AG04449 (cell line): ENCODE measurements at regions of chr17 and their contacts with region 1.

Region 1: DNA sequence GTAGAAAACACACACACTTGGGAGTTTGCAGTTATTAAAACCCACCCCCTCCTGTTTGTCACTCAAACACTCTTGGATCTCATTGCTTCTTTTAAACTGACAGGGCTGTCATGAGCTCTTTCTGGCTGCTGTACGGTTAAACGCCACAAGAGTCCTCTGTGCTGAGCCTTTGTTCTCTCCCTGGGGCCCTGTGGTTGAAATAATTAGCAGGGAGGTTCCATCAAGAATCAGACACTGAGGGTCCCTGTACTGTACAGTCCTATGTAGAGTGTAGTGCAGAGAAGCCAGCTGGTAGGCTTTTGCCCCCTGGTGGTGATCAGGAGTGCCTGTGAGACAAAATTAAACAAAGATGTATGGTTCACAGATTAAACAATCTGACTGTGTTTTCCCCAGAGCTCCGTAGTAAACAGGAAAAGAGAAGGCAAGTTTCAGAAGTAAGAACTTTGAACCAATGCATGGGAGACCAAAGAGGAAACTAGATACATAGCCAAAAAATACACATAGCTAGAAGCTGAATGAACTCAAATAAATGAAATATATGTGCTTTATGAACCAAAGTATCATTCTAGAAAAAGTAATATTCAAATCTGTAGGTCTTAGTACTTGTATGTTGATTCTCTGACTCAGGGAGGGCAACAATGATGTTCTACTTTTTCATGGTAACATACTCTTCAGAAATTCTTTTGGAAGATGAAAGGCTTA is 1.4 kb upstream of the SSH2 start:
- DNase-seq: no peak
- H3K4me3 ChIP-seq: peak overlapping the region; percentile 97
- CTCF ChIP-seq: peak; percentile 77

Region 2: DNA sequence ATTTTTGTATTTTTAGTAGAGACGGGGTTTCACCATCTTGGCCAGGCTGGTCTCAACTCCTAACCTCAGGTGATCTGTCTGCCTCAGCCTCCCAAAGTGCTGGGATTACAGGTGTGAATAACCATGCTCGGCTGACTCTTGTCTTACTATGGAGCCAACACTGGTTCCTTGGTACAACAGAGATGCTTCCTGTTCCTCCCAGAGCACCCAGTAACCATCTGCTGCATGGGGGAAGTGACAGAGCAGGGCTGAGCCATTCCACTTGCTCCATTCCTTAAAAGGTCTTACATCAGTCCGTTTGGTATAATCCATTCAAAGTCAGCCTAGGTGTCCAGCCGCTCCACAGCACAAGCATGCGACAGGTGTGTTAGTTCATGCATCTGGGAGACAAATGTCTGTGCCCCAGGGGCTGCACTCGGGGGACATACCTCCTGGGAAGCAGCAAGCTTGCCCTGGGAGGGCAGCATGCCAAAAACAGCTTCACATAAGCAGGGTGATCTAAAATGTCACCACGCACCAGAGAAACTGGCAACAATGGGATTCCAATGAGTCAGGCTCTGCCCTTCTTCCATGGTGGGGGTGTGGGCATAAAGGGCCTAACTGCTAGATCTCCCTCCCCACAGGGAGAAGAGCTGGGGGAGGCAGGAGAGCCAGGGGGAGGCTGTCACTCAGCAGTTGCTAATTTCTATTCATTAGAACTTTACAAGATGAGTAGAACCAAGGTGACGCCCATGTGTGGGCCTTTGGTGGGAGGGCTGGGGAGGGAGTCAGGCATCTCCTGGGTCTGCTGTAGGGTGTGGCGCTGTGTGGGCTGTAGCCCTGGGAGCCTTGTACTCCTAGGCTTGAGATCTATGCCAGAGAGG is 853.0 kb before region 1 on chr17:
- CTCF ChIA-PET with region 1: no interaction called
- POLR2A ChIA-PET with region 1: no interaction called
- DNase-seq: no peak
- H3K4me3 ChIP-seq: no peak overlapping the region
- CTCF ChIP-seq: no peak

Region 3: DNA sequence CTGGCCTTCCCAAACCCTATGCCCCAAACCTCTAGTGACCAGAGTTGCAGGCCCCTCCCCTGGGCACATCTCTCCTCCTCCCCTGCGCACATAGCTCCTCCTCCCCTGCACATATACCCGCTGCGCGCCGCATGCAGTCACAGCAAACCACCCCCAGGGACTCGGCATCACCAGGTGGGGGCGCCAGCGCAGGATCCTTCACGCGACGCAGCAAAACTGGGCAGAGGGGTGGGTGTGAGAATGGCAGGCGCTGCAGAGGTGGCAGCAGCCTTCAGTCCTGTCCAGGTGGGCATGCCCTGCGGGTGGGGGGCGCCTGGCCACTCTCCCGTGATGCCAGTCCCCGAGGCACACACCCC is 314.3 kb before region 1 on chr17:
- CTCF ChIA-PET with region 1: interaction called, 18 read pairs
- POLR2A ChIA-PET with region 1: no interaction called
- DNase-seq: no peak
- H3K4me3 ChIP-seq: peak overlapping the region; percentile 12; the same call in 1 of the 2 replicates
- CTCF ChIP-seq: peak; percentile 87

Region 4: DNA sequence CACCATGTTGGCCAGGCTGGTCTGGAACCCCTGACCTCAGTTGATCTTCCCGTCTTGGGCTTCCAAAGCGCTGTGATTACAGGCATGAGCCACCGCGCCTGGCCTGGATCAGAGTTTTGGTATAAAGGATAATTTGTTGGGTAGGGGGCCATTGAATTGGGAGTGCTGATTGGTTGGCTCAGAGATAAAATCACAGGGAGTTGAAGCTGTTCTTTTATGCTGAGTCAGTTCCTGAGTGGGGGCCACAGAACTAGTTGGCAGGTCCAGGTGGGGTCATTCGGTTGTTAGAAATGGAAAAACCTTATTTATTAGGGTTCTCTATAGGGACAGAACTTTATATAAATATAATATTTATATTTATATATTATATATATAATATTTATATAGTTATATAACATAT is 148.5 kb before region 1 on chr17:
- CTCF ChIA-PET with region 1: interaction called, 25 read pairs
- POLR2A ChIA-PET with region 1: no interaction called
- DNase-seq: no peak
- H3K4me3 ChIP-seq: no peak overlapping the region
- CTCF ChIP-seq: no peak

Region 5: DNA sequence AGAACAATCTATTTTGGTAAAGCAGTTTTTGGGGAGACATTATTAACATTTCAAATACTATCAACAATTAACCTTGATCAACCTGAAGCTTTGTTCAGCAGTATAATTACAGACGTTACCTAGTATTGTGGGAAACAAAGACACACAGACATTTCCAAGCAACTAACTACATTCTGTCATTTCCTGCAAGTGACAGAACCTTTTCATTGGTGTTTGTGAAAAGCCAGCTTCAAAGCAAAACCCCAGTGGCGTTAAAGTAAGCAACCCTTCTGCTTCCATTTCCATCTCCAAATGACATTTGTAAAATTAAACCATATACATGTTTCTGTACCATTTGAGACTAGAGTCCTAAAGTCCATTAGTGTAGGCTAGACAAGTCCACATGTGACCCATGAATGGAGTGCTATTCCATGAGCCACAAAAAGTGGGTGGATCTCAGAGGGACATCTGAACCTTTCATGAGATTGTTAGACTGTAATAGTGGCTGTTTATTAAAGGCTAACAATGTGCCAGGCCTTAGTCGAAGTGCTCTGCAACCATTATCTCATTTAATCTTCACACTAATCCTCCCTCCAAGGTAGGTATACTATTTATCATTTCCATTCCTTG is 102.6 kb before region 1 on chr17:
- CTCF ChIA-PET with region 1: interaction called, 25 read pairs
- POLR2A ChIA-PET with region 1: no interaction called
- DNase-seq: no peak
- H3K4me3 ChIP-seq: no peak overlapping the region
- CTCF ChIP-seq: no peak

Region 6: GRCh38 chr17:29867643-29868181 is 63.7 kb before region 1 on chr17:
- CTCF ChIA-PET with region 1: interaction called, 32 read pairs
- POLR2A ChIA-PET with region 1: no interaction called
- DNase-seq: no peak
- H3K4me3 ChIP-seq: no peak overlapping the region
- CTCF ChIP-seq: no peak

Region 7: DNA sequence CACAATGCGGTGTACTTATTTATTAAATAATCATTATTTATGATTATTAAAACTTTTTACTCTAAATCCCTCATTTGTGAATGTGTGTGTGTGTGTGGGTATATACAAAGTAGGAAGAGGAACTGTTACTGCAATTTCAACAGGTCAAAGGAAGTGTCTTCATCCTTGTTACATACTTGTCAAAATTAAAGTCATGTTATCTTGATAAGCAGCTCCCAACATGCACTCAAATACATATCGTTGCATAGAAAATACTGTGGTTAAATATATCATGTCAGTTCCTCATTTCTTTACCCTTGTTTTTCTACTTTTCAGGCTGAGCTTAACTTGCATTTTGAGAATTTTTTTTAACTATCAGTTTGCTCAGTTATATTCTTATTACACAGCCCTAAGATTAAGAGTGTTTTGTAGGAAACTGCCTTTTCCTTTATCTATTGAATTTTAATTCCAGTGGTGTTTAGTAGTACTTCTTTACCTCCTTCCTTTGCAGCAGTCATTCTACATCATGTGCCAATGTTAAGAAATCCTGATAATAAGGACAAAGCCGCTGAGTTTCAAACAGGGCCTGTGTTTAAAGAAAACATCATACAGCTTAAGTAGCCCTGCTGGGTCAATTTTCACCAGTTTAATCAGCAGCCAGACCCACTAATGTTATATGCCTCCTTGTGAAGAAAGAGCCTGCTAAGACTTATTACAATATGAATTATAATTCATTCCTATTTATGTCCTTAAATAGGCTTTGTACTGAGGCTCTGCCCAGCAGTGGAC is 17.2 kb after region 1 on chr17:
- CTCF ChIA-PET with region 1: interaction called, 20 read pairs
- POLR2A ChIA-PET with region 1: no interaction called
- DNase-seq: no peak
- H3K4me3 ChIP-seq: no peak overlapping the region
- CTCF ChIP-seq: no peak

Region 8: GRCh38 chr17:30021708-30022317 is 90.4 kb after region 1 on chr17:
- CTCF ChIA-PET with region 1: interaction called, 40 read pairs
- POLR2A ChIA-PET with region 1: no interaction called
- DNase-seq: no peak
- H3K4me3 ChIP-seq: no peak overlapping the region
- CTCF ChIP-seq: peak; percentile 69

Region 9: GRCh38 chr17:30336369-30337171 is 405.2 kb after region 1 on chr17:
- CTCF ChIA-PET with region 1: no interaction called
- POLR2A ChIA-PET with region 1: no interaction called
- DNase-seq: no peak
- H3K4me3 ChIP-seq: no peak overlapping the region
- CTCF ChIP-seq: peak; percentile 7